Activated T-helper 2 cell treated with anti-CD3 and anti-CD28 coated beads, Interferon-gamma antibody, Interleukin-2, Interleukin-4, amounts not matched to agents 10 μg/mL and 5 μg/mL and 100 μg/mL, durations not matched to agents 14 hours and 24 hours and 36 hours (primary cell): ENCODE measurements at regions of chr15 and their contacts with region 1.

Region 1: DNA sequence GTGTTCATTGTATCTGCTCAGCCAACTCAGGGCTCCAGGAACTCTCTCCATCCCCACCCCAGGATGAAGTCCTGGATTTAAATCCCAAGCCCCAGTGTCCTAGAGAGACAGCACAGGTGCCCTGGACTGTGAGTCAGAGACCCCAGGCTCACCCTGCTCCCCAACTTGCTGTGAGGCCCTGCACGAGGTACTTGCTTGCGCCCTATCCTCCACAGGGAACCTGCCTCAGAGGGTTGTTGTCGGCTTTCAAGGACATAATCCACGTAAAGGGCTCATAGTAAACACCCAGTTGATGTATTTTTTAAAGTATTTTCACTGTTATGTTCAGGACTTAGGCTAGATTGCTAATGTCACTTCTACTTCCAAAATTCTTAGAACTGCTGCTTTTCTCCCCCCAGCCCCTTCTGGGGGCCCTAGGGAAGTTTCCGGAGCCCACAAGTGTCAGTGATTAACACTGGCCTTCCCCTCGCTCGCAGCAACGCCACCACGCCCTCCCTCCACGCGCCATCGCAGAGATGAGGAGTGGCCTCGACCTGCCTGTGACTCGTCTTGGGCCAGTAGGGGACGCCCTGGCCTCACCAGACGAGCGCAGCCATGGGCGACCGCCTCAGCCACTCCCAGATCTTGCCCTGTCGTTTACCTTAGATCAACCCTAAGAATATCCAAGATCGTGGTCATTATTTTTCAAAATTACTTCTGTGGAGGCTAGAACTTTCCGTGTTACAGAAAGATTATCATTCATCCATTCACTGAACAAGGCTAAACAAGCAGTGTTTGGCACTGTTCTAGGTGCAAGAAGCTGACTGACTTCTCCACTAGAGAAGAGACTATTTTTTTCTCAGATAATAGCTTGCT is 6.0 kb upstream of the SRP14 start:
- DNase-seq: peak; percentile 77
- H3K4me3 Mint-ChIP-seq: peak overlapping the region; percentile 11
- H3K27ac Mint-ChIP-seq: peak overlapping the region; percentile 82
- H3K4me1 Mint-ChIP-seq: peaks cover 70% of the 10 kb centered on the region
- H3K27me3 Mint-ChIP-seq: no peaks in the 10 kb centered on the region

Region 2: GRCh38 chr15:40064221-40064894 is 19.4 kb after region 1 on chr15:
- intact Hi-C with region 1: loop called (anchors 2 kb)
- DNase-seq: no peak
- H3K4me3 Mint-ChIP-seq: peak overlapping the region; percentile 31
- H3K27ac Mint-ChIP-seq: peak overlapping the region; percentile 64
- H3K4me1 Mint-ChIP-seq: peaks cover 18% of the 10 kb centered on the region
- H3K27me3 Mint-ChIP-seq: no peaks in the 10 kb centered on the region

Region 3: GRCh38 chr15:40098489-40099261 is 53.7 kb after region 1 on chr15:
- intact Hi-C with region 1: loop called (anchors 2 kb)
- DNase-seq: peak; percentile 73
- H3K4me3 Mint-ChIP-seq: peak overlapping the region; percentile 67
- H3K27ac Mint-ChIP-seq: peak overlapping the region; percentile 97
- H3K4me1 Mint-ChIP-seq: peaks cover 76% of the 10 kb centered on the region
- H3K27me3 Mint-ChIP-seq: no peaks in the 10 kb centered on the region

Region 4: DNA sequence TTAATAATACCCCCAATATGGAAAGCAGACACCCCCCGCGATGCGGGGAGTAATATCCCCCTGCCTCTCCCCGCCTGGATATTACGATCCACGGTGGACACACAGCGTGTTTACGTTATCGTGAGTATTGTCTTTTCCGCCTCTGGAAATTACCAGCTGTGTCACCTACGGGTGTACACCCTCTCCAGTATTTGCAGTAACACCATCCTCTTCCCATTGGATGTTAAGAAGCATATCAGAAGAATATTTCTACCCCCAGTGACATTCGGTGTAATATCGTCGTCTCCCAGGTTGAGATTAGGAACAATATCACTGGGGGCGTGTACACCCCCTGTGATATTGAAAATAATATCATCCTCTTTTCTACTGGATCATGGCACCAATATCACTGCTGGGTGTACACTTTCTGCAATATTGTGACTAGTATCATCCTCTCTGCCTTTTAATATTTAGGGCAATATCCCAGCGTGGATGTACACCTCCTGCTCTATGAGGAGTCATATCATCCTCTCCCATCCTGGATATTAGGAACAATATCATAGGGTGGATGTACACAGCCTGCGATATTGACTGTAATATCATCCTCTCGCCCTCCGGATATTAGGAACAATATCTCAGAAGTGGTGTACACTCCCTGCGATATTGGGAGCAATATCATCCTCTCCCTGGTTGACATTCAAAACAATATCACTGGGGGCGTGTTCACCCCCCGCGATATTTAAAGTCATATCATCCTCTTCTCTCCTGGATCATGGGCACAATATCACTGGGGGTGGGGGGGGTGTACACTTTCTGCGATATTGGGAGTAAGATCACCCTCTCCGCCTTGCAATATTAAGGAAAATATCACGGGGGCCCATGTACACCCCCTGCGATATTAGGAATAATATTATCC is 84.1 kb after region 1 on chr15:
- intact Hi-C with region 1: loop called (anchors 1 kb)
- DNase-seq: no peak
- H3K4me3 Mint-ChIP-seq: no peak overlapping the region
- H3K27ac Mint-ChIP-seq: no peak overlapping the region
- H3K4me1 Mint-ChIP-seq: no peaks in the 10 kb centered on the region
- H3K27me3 Mint-ChIP-seq: no peaks in the 10 kb centered on the region

Region 5: GRCh38 chr15:40160689-40161688 is 116.0 kb after region 1 on chr15 and contains the start of gene BUB1B:
- intact Hi-C with region 1: loop called (anchors 1 kb)
- DNase-seq: peak; percentile 94
- H3K4me3 Mint-ChIP-seq: no peak within 1 kb of the TSS
- H3K27ac Mint-ChIP-seq: no peak within 1 kb of the TSS
- H3K4me1 Mint-ChIP-seq: peaks cover 10% of the 10 kb centered on the region
- H3K27me3 Mint-ChIP-seq: no peaks in the 10 kb centered on the region
- total RNA-seq, gene BUB1B: 70.7 and 73.1 TPM in 2 replicates

Region 6: GRCh38 chr15:40182358-40183029 is 137.6 kb after region 1 on chr15:
- intact Hi-C with region 1: loop called (anchors 5 kb)
- DNase-seq: no peak
- H3K4me3 Mint-ChIP-seq: peak overlapping the region; percentile 51
- H3K27ac Mint-ChIP-seq: peak overlapping the region; percentile 67
- H3K4me1 Mint-ChIP-seq: peaks cover 42% of the 10 kb centered on the region
- H3K27me3 Mint-ChIP-seq: no peaks in the 10 kb centered on the region

Region 7: DNA sequence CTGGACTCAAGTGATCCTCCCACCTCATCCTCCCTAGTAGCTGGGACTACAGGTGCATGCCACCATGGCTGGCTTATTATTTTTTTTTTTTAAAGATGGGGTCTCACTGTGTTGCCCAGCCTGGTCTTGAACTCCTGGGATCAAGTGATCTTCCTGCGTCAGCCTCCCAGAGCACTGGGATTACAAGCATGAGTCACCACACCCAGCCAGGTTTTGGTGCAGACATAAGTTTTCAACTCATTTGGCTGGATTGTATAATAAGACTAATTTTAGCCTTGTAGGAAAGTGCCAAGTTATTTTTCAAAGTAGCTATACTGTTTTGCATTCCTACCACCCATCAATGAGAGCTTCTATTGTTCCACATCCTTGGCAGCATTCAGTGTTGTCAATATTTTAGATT is 148.0 kb after region 1 on chr15:
- intact Hi-C with region 1: no loop called
- DNase-seq: no peak
- H3K4me3 Mint-ChIP-seq: no peak overlapping the region
- H3K27ac Mint-ChIP-seq: no peak overlapping the region
- H3K4me1 Mint-ChIP-seq: peaks cover 29% of the 10 kb centered on the region
- H3K27me3 Mint-ChIP-seq: no peaks in the 10 kb centered on the region